Aorta (tissue), 5 donors: ENCODE measurements at regions of chr3 and their contacts with region 1.

Region 1: GRCh38 chr3:169399068-169399467 is 264.4 kb downstream of the MECOM start:
- DNase-seq: no peak
- ATAC-seq: no peak
- H3K4me3 ChIP-seq: no peak overlapping the region
- H3K27ac ChIP-seq: no peak overlapping the region
- H3K4me1 ChIP-seq: peaks cover 0 to 3% of the 10 kb centered on the region in 2 donors
- H3K27me3 ChIP-seq: no peaks in the 10 kb centered on the region

Region 2: GRCh38 chr3:169260296-169260695 is 138.8 kb before region 1 on chr3:
- intact Hi-C with region 1: no loop called
- DNase-seq: no peak
- ATAC-seq: peak; percentile 58
- H3K4me3 ChIP-seq: no peak overlapping the region
- H3K27ac ChIP-seq: no peak overlapping the region
- H3K4me1 ChIP-seq: peaks cover 0 to 8% of the 10 kb centered on the region in 2 donors
- H3K27me3 ChIP-seq: no peaks in the 10 kb centered on the region

Region 3: GRCh38 chr3:169478566-169479313 is 79.7 kb after region 1 on chr3:
- intact Hi-C with region 1: loop called in 1 of 2 experiments (anchors 5 kb)
- DNase-seq: no peak
- ATAC-seq: no peak
- H3K4me3 ChIP-seq: no peak overlapping the region
- H3K27ac ChIP-seq: peak overlapping the region; percentile 46 to 50
- H3K4me1 ChIP-seq: peaks cover 6 to 8% of the 10 kb centered on the region in 2 donors
- H3K27me3 ChIP-seq: no peaks in the 10 kb centered on the region

Region 4: DNA sequence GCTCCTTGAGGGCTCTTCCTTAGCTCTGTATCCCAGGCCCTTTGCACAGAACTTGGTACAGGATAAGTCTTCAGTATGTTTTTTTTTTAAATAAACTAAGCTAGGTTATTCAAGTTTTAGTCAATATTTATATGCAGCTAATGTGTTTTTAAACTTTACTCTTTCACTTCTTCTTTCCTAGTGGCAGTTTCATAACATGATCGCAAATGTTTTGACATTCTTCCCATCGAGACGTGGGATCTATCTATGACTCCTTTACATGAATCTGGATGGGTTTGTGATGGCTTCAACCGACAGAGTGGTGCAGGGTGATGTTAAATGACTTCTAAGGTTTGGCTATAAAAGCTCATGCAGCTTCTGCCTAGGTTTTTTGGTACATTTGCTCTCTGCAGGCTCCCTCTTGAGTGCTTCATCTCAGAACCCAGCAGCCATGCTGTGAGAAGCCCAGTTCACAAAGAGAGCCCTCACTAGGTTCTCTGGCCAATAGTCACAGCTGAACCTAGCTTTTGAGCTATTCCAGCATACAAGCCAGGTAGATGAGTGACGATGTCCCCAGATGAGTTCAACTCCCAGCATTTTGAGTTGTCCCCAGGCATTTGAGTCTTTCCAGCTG is 278.0 kb after region 1 on chr3:
- intact Hi-C with region 1: no loop called
- DNase-seq: no peak
- ATAC-seq: no peak
- H3K4me3 ChIP-seq: no peak overlapping the region
- H3K27ac ChIP-seq: no peak overlapping the region
- H3K4me1 ChIP-seq: no peaks in the 10 kb centered on the region
- H3K27me3 ChIP-seq: no peaks in the 10 kb centered on the region